RWPE1 (cell line): ENCODE measurements at regions of chrX and their contacts with region 1.

Region 1: GRCh38 chrX:17046478-17047097 is 100.1 kb downstream of the REPS2 start:
- DNase-seq: peak; percentile 32
- H3K27ac ChIP-seq: no peak overlapping the region
- CTCF ChIP-seq: peak; percentile 66

Region 2: GRCh38 chrX:16826207-16826606 is 220.4 kb before region 1 on chrX:
- CTCF ChIA-PET with region 1: interaction called, 10 read pairs
- POLR2A ChIA-PET with region 1: no interaction called
- DNase-seq: no peak
- H3K27ac ChIP-seq: peak overlapping the region; percentile 90
- CTCF ChIP-seq: peak; percentile 31

Region 3: DNA sequence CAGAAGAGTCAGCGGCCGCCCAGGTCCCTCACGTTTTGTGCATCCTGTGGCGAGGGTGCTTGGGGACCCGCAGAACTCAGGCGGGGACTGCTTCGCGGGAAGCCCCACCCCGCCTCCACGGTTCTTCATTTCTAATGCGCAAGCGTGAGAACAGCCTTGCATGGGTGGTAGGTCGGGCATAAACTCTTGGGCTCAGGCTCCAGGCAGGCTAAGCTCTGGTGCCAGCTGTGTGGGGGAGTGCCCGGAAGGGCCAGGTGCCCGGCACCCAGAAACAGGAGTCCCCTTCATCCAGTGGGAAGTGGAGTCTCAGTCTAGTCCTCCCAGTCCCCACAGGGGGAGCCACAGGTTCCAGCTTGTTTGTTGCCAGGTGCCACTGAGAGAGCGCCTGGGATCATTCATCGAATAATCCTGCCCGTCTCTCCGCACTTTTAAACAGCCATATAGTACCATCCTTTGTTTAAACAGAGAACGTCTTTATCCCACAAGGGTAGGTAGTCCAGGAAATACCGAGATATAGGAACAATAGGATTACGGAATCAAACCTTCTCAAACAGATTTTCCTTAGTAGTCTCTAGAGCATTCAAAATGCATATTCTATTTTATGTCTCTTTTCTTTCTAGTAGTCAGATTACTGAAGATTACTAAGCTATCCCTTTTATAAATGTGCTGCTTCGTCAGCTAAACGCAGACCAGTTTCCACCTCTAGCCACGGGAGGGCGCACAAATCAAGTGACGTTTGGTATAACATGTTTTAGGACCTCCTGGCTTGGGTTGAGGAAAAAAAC is 163.7 kb before region 1 on chrX:
- CTCF ChIA-PET with region 1: interaction called, 22 read pairs
- POLR2A ChIA-PET with region 1: no interaction called
- DNase-seq: peak; percentile 31
- H3K27ac ChIP-seq: peak overlapping the region; percentile 79
- CTCF ChIP-seq: peak; percentile 62